Prostate gland (tissue), 2 donors: ENCODE measurements at regions of chr19 and their contacts with region 1.

Region 1: GRCh38 chr19:4968462-4969291 is at the start of gene KDM4B:
- DNase-seq: peak; percentile 99
- H3K4me3 ChIP-seq: peak within 1 kb of the TSS; percentile 67 to 76
- H3K27ac ChIP-seq: peak within 1 kb of the TSS; percentile 90 to 92
- H3K4me1 ChIP-seq: peaks cover 19% of the 10 kb centered on the region
- H3K27me3 ChIP-seq: no peaks in the 10 kb centered on the region
- CTCF ChIP-seq: peak in 1 of 4 experiments; percentile 10
- POLR2A ChIP-seq: peak; percentile 95
- total RNA-seq, gene KDM4B: 74.6 to 136 TPM

Region 2: GRCh38 chr19:5031231-5032100 is 62.8 kb after region 1 on chr19:
- intact Hi-C with region 1: loop called (anchors 5 kb)
- DNase-seq: peak; percentile 79
- H3K4me3 ChIP-seq: no peak overlapping the region
- H3K27ac ChIP-seq: peak overlapping the region in 1 of 2 donors; percentile 33
- H3K4me1 ChIP-seq: peaks cover 27% of the 10 kb centered on the region
- H3K27me3 ChIP-seq: no peaks in the 10 kb centered on the region
- CTCF ChIP-seq: peak; percentile 90 to 97 (median 94)
- POLR2A ChIP-seq: no peak